ENCODE measurements at regions of chr10 and their contacts with region 1.

Region 1: GRCh38 chr10:119199231-119199992 is 8.0 kb upstream of the GRK5 start:
- DNase-seq: peak; percentile 65
- ATAC-seq: peak; percentile 96

Region 2: DNA sequence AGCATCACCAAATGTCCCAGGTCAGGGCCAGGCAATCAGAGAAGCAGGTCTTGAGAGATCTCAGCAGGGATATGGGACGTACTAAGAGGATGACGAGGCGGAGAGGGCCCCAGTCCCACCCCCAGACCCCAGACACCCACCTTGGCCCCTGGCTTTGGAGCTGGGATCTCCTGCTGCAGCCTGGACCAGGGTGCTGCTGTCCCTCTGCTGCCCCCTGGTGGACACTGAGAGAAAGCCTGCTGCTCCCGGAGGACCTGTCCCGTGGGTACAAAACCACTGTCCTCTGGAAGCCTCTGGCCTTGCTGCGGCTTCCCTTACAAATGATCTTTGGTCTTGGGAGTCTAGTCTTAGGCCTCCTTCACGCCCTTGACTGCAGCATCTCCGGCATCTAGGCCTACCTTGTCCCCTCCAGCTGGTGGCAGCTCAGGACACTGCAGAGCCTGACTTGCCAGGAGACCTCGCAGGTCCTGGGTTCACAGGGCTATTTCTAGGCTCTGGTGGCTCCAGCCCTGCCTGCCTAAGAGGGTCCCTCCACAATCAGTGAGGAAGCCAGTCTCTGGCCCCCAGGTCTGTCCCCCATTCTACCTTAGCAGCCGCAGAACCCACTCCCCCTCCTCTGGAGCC is 246.0 kb after region 1 on chr10:
- intact Hi-C with region 1: loop called (anchors 2 to 5 kb)
- DNase-seq: peak; percentile 87
- ATAC-seq: peak; percentile 54 to 66

Region 3: DNA sequence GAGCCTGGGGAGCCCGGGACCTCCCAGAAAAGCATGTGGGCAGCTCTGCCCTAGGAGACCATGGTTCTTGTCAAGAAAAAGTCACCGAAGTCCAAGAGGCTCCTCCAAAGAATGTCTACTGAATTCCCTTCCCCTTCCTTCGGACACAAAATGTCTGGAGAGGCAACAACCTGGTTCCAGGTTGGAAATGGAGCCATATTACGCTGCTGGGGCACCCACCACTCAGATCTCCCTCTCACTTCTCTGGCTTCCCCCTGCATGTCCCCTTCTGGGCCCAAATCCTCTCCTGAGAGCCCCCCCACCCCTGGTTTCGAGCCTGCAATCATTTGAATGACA is 290.5 kb after region 1 on chr10:
- intact Hi-C with region 1: loop called in 1 of 2 experiments (anchors 2 kb)
- DNase-seq: no peak
- ATAC-seq: no peak

Measured in left cardiac atrium (tissue), 4 donors.